ENCODE measurements at regions of chr16 and their contacts with region 1.

Region 1: GRCh38 chr16:69930117-69930776 is 20.9 kb upstream of the CLEC18A start:
- DNase-seq: peak; percentile 88
- CTCF ChIP-seq: peak; percentile 64

Region 2: DNA sequence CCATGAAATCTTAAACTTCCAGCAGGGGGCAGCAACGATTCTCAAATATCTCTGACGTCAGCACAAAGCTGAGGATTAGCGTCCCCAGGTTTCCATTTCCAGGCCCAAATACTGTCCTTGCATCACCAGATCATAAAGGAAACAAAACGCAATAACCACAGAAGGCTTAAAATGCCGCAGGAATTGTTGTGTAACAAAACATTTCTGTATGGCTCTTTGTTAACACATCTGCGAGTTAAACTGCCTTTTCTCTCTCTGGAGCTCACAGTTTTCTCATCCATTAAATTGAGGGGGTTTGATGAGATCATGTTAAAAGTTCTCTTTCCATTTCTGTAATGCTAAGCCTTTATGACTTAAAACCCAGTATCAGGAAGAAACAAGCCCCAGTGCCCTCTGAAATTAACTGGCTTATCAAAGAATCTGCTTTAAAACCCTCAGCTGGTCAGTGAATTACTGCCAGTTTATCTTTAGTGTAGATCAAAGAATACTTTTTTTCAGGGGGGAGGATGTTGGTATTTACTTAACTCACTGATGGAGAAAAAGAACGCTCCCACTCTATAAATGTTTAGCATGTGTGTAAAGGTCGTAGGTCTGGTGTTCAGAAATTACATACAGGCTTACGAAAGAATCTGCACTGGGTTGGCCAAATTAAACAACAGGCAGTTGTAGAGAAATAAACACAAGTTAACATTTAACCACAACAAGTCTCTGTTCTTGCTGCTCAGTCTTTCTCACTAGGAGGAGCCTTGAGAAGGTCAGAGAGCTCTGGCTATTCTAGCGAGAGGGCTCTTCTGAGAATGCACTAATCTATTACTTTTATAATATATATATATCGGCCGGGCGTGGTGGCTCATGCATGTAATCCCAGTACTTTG is 533.8 kb before region 1 on chr16:
- in situ Hi-C with region 1: loop called (anchors 25 kb)
- DNase-seq: peak; percentile 56
- CTCF ChIP-seq: peak; percentile 37

Region 3: DNA sequence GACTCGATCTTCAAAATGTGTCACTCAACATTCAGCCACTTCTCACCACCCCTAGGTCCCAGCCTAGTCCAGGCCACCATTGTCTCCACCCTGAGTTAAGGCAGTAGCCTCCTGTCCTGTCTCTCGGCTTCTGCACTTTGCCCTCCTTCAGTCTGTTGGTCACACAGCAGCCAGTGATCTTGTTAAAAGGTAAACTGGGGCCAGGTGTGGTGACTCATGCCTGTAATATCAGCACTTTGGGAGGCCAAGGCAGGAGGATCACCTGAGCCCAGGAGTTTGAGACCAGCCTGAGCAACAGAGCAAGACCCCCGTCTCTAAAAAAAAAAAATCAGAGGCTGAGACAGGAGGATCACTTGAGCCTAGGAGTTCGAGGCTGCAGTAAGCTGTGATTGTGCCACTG is 142.4 kb before region 1 on chr16:
- in situ Hi-C with region 1: loop called (anchors 10 kb)
- DNase-seq: no peak
- CTCF ChIP-seq: no peak

Region 4: DNA sequence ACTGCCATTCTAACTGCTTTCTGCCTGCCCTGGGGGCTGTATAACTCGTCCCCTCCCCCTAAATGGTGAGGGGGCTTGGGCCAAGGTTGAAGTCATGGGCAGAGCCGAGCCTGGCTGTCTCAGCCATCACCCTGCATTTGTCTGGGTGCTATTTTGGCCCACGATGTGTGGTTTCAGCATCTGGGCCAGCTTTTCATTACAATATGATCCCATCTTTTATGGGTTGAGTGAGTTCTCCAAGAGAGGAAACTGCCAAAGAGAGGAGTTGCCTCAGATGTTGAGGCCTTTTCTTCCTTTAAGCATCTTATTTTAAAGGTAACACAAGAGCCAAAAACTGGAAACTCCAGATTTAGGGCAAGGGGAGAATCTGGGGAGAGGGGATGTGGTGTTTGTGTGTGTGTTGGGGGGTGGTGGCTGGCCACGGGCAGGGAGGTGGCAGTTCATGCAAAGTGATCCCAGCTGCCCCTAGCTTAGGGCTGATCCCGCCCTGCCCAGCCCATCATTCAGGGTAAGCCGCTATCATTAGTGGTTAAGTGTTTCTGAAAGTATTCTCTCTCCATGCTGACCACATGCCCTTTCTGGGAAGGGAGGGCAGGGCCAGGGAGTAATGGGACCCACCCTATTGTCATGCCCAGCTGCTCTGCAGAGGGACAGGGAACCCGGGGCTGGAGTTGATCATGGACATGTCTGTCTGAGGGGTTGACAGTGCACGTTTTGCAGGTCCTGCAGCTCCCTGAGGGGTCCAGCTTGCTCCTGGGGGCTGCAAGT is 62.3 kb before region 1 on chr16:
- in situ Hi-C with region 1: no loop called
- DNase-seq: no peak
- CTCF ChIP-seq: no peak

Region 5: GRCh38 chr16:70018254-70018653 is 88.0 kb after region 1 on chr16:
- in situ Hi-C with region 1: no loop called
- DNase-seq: peak; percentile 36
- CTCF ChIP-seq: no peak